ENCODE measurements at regions of chr2 and their contacts with region 1.

Region 1: DNA sequence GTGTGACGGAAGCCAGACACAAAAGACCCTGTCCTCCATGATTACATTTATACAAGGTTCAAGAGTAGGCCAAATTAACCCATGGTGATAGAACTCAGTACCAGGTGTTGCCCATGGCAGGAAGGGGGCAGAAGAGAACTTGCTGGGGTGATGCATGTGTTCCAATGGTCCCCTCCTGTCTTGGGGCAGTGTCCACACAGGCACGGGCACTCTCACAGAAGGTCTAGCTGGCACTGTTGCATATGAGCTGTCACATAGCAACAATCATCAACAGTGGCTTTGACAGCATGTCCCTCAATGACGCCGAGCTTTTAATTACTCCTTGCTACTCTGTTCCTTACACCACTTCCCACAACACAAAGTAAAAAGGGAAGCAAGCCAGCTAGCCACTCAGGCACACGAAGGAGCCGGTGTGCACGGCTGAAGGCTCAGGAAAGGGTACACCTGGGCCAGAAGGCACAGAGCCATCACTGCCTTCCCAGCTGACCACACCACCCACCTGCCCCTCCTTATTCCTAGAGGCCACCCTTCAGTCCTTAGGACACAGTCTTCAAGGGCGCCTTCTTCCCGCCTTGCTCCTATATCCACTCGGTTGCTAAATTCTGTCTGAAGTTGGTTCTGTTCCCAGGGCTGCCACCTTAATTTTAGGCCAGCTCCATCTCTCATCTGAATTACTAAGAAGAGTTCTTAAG is 28.9 kb downstream of the RPL31 start:
- DNase-seq: no peak

Region 2: DNA sequence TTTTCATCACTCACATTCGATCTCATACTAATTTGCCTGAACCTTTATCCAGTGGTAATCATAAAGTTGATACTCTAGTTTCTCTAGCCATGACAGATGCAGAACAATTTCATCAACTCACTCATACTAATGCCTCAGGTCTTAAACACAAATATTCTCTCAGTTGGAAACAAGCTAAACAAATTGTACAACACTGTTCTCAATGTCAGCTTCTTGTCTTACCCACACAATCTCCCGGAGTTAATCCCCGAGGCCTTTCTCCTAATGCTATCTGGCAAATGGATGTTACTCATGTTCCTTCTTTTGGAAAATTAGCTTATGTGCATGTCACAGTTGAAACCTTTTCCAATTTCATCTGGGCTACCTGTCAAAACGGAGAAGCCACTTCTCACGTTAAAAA is 210.1 kb after region 1 on chr2:
- CTCF ChIA-PET with region 1: interaction called, 11 read pairs
- POLR2A ChIA-PET with region 1: no interaction called
- DNase-seq: no peak

Region 3: DNA sequence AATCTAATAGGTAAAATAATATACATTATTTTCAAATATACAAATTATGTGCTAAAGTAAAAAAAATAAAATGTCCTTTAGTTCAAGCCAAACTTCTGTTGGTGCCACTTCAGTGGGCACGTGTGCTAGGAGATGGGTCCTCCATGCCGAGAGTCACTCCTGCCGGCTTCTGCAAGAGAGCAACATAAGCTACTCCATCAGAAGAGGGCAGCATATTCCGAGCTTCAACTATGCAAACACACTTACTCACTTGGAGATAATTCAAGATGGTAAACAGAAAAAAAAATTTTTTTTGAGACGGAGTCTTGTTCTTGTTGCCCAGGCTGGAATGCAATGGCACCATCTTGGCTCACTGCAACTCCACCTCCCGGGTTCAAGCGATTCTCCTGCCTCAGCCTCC is 246.1 kb after region 1 on chr2:
- CTCF ChIA-PET with region 1: no interaction called
- POLR2A ChIA-PET with region 1: no interaction called
- DNase-seq: no peak